WTC11 (cell line): ENCODE measurements at regions of chr1 and their contacts with region 1.

Region 1: GRCh38 chr1:38818175-38818976 is 41.2 kb downstream of the RRAGC start:
- DNase-seq: peak; percentile 83
- ATAC-seq: peak; percentile 82
- H3K4me3 Mint-ChIP-seq: peak overlapping the region; percentile 79
- H3K27ac Mint-ChIP-seq: no peak overlapping the region
- H3K4me1 Mint-ChIP-seq: peaks cover 24% of the 10 kb centered on the region
- H3K27me3 Mint-ChIP-seq: peaks cover 32% of the 10 kb centered on the region
- CTCF ChIP-seq: peak; percentile 84

Region 2: DNA sequence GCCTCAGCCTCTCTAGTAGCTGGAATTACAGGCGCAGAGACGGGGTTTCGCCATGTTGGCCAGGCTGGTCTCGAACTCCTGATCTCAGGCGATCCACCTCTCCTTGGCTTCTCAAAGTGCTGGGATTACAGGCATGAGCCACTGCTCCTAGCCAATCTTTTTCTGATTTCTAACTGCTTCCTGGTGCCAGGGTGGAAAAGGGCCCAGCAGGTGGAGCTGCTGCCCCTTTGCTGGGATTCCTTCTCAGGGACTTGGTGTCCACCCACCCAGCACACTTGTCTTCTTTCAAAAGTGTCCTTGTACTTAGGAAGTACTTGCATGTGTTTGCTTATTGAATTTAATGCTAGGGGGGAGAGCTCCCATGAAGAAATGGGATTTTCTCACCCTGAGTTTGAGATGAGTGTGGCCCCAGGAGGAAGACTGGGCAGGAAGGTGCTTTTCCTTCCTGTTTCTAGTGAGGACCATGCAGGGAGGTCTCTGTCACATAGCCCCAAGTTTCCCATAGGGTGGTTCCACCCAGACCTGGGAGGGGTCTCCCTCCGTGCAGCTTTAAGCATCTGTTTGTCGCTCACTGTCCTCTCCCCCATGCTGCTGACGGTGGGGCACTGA is 791.7 kb before region 1 on chr1:
- CTCF ChIA-PET with region 1: interaction called, 11 read pairs
- POLR2A ChIA-PET with region 1: no interaction called
- DNase-seq: peak; percentile 74
- ATAC-seq: peak; percentile 19
- H3K4me3 Mint-ChIP-seq: no peak overlapping the region
- H3K27ac Mint-ChIP-seq: peak overlapping the region; percentile 57; the same call in 1 of the 2 replicates
- H3K4me1 Mint-ChIP-seq: peaks cover 54% of the 10 kb centered on the region
- H3K27me3 Mint-ChIP-seq: no peaks in the 10 kb centered on the region
- CTCF ChIP-seq: peak; percentile 62

Region 3: DNA sequence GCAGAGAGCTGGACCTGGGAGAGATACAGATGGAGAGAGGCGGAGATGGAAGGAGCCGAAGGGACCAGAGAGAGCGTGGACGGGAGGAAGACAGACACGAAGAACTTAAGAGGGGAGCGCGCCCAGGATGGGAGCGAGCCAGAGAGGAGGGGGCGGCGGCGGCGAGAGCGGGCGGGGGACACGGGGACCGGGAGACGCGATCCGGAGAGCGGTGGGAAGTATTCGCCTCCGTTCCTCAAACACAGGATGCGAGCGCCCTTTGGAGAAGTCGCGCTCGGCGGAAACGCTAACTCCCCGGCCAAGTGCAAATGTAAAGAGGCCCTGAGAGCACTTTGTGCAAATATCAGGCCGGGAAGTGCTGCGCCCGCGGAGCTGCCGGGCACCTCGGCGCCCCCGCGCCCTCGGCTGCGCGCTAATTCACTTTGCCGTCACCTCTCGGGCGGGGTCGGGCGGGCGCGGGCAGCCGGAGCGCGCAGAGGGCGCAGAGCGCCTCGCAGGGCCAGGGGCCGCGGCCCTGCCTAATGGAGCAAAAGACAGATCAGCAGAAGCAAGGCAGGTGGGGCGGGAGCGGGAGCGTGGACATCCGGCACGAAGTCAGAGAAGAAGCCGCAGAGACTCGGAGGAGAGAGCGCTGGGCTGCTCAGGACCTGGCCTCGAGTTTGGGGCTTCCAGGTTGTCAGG is 240.0 kb before region 1 on chr1:
- CTCF ChIA-PET with region 1: interaction called, 12 read pairs
- POLR2A ChIA-PET with region 1: no interaction called
- DNase-seq: peak; percentile 63
- ATAC-seq: peak; percentile 62
- H3K4me3 Mint-ChIP-seq: peak overlapping the region; percentile 75
- H3K27ac Mint-ChIP-seq: no peak overlapping the region
- H3K4me1 Mint-ChIP-seq: peaks cover 27% of the 10 kb centered on the region
- H3K27me3 Mint-ChIP-seq: peaks cover 44% of the 10 kb centered on the region
- CTCF ChIP-seq: no peak

Region 4: GRCh38 chr1:38586993-38587646 is 231.3 kb before region 1 on chr1:
- CTCF ChIA-PET with region 1: interaction called, 16 read pairs
- POLR2A ChIA-PET with region 1: no interaction called
- DNase-seq: peak; percentile 84
- ATAC-seq: peak; percentile 98
- H3K4me3 Mint-ChIP-seq: no peak overlapping the region
- H3K27ac Mint-ChIP-seq: no peak overlapping the region
- H3K4me1 Mint-ChIP-seq: peaks cover 6% of the 10 kb centered on the region
- H3K27me3 Mint-ChIP-seq: no peaks in the 10 kb centered on the region
- CTCF ChIP-seq: peak; percentile 92

Region 5: DNA sequence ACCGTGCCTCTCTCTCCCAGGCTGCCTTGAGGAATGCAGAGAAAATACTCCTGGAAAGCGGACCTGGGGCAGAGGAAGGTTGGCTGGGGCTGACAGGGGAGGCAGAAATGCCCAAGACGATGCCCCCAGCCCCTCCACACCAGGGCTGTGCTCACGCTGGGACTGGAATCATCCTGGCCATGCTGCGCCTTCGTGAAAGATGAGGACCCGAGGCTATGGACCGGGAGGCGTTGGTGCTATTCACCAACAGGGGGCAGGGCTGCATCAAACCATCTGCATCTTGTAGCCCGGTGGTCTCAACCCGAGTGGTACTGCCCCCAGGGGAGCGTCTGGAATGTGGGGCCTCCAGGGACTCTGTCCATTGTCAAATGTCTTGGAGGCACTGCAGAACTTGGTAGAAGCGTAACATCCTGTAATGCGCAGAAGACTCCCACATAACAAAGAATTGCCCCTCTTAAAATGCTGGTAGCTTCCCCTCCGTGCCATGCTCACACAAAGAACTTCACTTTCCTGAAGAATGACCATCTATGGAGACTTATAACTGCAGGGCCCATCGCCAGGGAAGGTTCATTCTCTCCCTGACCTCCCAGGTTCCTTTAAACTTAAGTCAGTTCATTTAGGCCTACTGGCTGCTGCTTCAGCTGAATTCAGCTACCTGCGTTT is 210.0 kb before region 1 on chr1:
- CTCF ChIA-PET with region 1: interaction called, 23 read pairs
- POLR2A ChIA-PET with region 1: no interaction called
- DNase-seq: peak; percentile 87
- ATAC-seq: peak; percentile 95
- H3K4me3 Mint-ChIP-seq: no peak overlapping the region
- H3K27ac Mint-ChIP-seq: no peak overlapping the region
- H3K4me1 Mint-ChIP-seq: peaks cover 12% of the 10 kb centered on the region
- H3K27me3 Mint-ChIP-seq: peaks cover 28% of the 10 kb centered on the region
- CTCF ChIP-seq: peak; percentile 79

Region 6: GRCh38 chr1:38804062-38804886 is 14.1 kb before region 1 on chr1:
- CTCF ChIA-PET with region 1: interaction called, 14 read pairs
- POLR2A ChIA-PET with region 1: interaction called, 6 read pairs
- DNase-seq: peak; percentile 63
- ATAC-seq: peak; percentile 70
- H3K4me3 Mint-ChIP-seq: peak overlapping the region; percentile 72
- H3K27ac Mint-ChIP-seq: no peak overlapping the region
- H3K4me1 Mint-ChIP-seq: peaks cover 15% of the 10 kb centered on the region
- H3K27me3 Mint-ChIP-seq: peaks cover 66% of the 10 kb centered on the region
- CTCF ChIP-seq: no peak

Region 7: GRCh38 chr1:38834937-38835827 is 16.8 kb after region 1 on chr1:
- CTCF ChIA-PET with region 1: interaction called, 42 read pairs
- POLR2A ChIA-PET with region 1: no interaction called
- DNase-seq: peak; percentile 37
- ATAC-seq: peak; percentile 87
- H3K4me3 Mint-ChIP-seq: no peak overlapping the region
- H3K27ac Mint-ChIP-seq: no peak overlapping the region
- H3K4me1 Mint-ChIP-seq: peaks cover 22% of the 10 kb centered on the region
- H3K27me3 Mint-ChIP-seq: no peaks in the 10 kb centered on the region
- CTCF ChIP-seq: peak; percentile 68

Region 8: DNA sequence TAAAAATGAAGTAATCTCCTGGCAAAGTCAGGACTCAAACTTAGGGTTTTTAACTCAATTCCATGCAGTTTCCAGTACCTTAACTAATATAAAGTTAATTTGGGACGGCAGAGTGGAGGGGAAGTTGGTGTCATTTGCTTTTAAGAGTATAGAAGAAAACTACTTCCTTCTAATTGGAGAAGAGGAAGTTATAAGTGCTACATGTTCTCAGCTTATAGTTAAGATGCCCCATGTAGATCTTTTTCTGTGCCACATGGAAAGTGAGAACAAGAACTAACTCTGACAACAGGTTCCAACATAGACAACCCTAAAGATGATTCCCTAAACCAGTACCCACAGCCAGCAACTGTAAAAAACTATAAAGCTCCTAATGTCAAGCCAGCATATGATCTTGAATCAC is 29.7 kb after region 1 on chr1:
- CTCF ChIA-PET with region 1: no interaction called
- POLR2A ChIA-PET with region 1: no interaction called
- DNase-seq: no peak
- ATAC-seq: no peak
- H3K4me3 Mint-ChIP-seq: no peak overlapping the region
- H3K27ac Mint-ChIP-seq: no peak overlapping the region
- H3K4me1 Mint-ChIP-seq: no peaks in the 10 kb centered on the region
- H3K27me3 Mint-ChIP-seq: no peaks in the 10 kb centered on the region
- CTCF ChIP-seq: no peak

Region 9: GRCh38 chr1:38898653-38899230 is 80.4 kb after region 1 on chr1:
- CTCF ChIA-PET with region 1: no interaction called
- POLR2A ChIA-PET with region 1: no interaction called
- DNase-seq: no peak
- ATAC-seq: no peak
- H3K4me3 Mint-ChIP-seq: no peak overlapping the region
- H3K27ac Mint-ChIP-seq: no peak overlapping the region
- H3K4me1 Mint-ChIP-seq: no peaks in the 10 kb centered on the region
- H3K27me3 Mint-ChIP-seq: no peaks in the 10 kb centered on the region
- CTCF ChIP-seq: no peak